ENCODE measurements at regions of chr18 and their contacts with region 1.

Region 1: GRCh38 chr18:24584813-24585212 is 124.4 kb downstream of the HRH4 start:
- H3K4me3 ChIP-seq: no peak overlapping the region
- H3K27ac ChIP-seq: no peak overlapping the region
- H3K4me1 ChIP-seq: no peaks in the 10 kb centered on the region
- CTCF ChIP-seq: no peak

Region 2: GRCh38 chr18:24600076-24600654 is 15.4 kb after region 1 on chr18:
- CTCF ChIA-PET with region 1: interaction called, 13 read pairs
- POLR2A ChIA-PET with region 1: no interaction called
- H3K4me3 ChIP-seq: no peak overlapping the region
- H3K27ac ChIP-seq: no peak overlapping the region
- H3K4me1 ChIP-seq: no peaks in the 10 kb centered on the region
- CTCF ChIP-seq: peak; percentile 21; the same call in 1 of the 2 replicates

Region 3: DNA sequence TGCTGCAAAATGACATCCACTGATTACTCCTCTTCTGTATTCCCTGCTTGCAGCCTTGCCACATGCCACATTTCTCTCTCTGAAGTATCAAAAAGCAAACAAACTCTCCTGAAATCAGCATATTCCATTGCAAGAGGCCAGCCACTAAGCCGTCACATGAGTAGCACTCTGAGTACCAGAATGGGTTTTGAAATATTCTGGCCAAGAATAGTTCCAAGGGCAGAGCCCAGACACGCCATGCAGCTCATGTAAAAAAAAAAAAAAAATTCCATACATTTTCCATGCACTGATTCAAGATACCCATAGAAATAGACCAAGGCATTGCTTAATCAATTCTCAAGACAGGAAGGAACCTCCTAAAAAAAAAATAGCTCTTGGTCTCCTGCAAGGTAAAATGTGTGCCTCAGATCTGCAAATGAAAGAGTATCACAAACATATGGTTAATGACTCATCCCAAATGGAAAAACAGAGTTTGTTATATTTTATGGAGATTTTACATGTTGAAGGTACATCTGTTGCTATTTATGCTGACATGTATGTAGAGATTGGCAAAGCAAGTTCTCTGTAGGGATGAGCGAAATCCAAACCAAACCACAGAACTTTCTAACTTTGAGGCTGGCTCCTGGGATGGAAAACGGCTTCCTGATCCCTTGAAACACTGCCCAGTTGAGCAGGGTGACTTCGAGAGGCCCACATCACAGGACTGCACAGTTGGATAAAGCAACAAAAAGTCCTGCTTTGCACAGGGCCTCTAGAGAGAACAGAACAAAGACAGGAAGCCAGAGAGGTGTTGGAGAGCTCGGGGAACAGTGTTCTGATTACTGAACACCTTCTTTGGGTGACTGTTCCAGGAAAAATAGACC is 421.0 kb after region 1 on chr18:
- CTCF ChIA-PET with region 1: no interaction called
- POLR2A ChIA-PET with region 1: no interaction called
- H3K4me3 ChIP-seq: no peak overlapping the region
- H3K27ac ChIP-seq: no peak overlapping the region
- H3K4me1 ChIP-seq: no peaks in the 10 kb centered on the region; the same call in 1 of the 2 replicates
- CTCF ChIP-seq: no peak

Region 4: DNA sequence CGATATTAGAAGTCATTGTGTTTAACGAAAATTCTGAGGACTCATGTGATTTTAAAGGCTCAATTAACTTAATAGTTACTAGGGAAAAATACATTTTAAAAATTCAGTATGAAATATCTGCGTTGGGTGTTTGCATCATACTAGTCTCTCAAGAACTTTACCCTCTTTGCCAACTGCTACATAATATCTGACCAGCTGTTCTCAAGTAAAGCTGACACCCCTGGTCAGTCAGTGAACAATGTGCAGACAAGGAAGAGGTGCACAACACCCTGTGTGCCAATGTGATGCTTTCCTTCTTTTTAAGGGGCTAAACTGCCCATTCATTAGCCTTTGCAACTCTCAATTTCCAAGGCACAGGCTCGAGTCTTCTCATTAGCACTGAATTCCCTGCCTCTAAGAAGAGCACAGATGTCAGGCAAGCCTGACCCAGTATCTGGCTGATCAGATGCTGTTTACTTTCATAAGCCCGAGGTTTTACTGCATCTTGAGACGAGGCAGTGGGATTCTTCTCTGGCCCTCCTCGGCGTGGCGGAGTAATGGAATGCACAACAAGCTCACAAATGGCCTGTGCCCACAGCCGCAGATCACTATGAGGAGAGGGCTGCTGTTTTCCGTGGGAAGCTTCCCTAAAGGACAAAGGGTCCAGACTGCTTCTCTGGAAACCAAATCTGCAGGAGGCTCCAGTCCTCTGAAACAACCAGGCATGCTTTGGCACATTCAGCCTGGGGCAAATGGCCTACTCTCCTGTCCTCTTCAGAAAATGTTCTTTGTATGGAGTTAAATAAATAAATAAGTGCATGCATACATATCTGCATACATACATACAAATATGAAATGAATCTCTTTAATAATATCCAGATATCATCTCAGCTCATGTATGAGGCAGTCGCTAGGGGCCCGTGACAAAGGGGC is 526.8 kb after region 1 on chr18:
- CTCF ChIA-PET with region 1: no interaction called
- POLR2A ChIA-PET with region 1: no interaction called
- H3K4me3 ChIP-seq: no peak overlapping the region
- H3K27ac ChIP-seq: no peak overlapping the region
- H3K4me1 ChIP-seq: no peaks in the 10 kb centered on the region; the same call in 1 of the 2 replicates
- CTCF ChIP-seq: no peak